Activated CD8-positive, alpha-beta T cell treated with anti-CD3 and anti-CD28 coated beads, Interleukin-2, amount 10 ng/mL, durations not matched to agents 7 days and 5 days (primary cell): ENCODE measurements at regions of chr1 and their contacts with region 1.

Region 1: GRCh38 chr1:9651565-9652378 is at the start of gene PIK3CD:
- DNase-seq: peak; percentile 59
- ATAC-seq: peak; percentile 42
- H3K4me3 Mint-ChIP-seq: peak within 1 kb of the TSS; percentile 96
- H3K27ac Mint-ChIP-seq: peak within 1 kb of the TSS; percentile 95
- H3K4me1 Mint-ChIP-seq: peaks cover 58% of the 10 kb centered on the region
- H3K27me3 Mint-ChIP-seq: no peaks in the 10 kb centered on the region
- total RNA-seq, gene PIK3CD: 283 to 285 TPM

Region 2: DNA sequence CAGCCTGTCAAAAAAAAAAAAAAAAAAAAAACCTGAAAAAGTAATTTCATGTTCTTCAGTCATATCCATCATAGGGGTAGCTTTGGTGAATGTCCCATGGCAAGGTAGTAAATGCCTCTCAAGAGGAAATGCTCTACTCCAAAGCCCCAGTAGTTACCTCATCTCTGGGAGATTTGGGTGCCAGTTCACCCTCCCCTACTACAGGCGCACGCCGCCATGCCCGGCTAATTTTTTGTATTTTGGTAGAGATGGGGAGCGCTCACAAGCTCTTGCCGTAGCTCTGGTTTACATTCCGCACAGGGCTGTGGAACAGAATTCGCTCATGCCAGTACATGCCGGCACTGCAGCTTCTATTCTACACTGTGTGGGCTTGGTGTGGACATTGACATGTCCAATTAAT is 13.4 kb after region 1 on chr1:
- CTCF ChIA-PET with region 1: interaction called, 4 read pairs
- POLR2A ChIA-PET with region 1: interaction called, 25 read pairs
- DNase-seq: no peak
- ATAC-seq: no peak
- H3K4me3 Mint-ChIP-seq: peak overlapping the region; percentile 8
- H3K27ac Mint-ChIP-seq: peak overlapping the region; percentile 60
- H3K4me1 Mint-ChIP-seq: peaks cover 59% of the 10 kb centered on the region
- H3K27me3 Mint-ChIP-seq: no peaks in the 10 kb centered on the region

Region 3: DNA sequence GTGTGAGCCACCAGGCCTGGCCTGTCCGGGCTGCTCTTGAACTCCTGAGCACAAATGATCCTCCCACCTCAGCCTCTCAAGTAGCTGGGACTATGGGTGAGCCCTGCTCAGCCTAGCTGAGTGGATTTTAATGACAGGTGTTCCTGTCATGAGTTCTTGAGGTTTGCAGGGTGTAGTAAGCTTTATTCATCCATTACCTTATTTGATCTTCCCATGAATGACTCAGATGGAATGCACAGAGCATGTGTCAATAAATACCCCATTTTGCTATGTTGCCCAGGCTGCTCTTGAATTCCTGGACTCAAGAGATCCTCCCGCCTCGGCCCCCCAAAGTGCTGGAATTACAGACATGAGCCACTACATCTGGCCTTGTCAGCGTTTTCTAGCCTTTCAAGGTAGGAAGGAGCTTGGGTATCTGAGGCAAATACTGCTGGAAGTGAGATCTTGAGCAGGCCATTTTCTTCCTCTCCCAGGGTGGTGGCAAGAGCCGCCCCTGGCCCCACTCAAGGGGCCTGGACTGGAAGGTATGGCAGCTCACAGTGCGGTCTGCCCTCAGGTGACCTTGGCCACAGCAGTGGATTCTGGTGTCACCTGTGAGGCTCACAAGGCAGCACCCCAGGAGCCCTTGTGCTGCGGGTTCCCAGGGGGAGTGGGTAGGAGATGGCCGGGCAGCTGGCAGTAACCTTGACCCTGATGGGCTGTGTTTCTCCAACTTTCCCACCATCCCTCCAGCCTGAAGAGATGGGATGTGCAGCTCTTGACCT is 19.8 kb after region 1 on chr1:
- CTCF ChIA-PET with region 1: interaction called, 3 read pairs
- POLR2A ChIA-PET with region 1: interaction called, 25 read pairs
- DNase-seq: no peak
- ATAC-seq: peak; percentile 23
- H3K4me3 Mint-ChIP-seq: no peak overlapping the region
- H3K27ac Mint-ChIP-seq: peak overlapping the region; percentile 57
- H3K4me1 Mint-ChIP-seq: peaks cover 62% of the 10 kb centered on the region
- H3K27me3 Mint-ChIP-seq: no peaks in the 10 kb centered on the region

Region 4: GRCh38 chr1:9689011-9689706 is 37.4 kb after region 1 on chr1:
- CTCF ChIA-PET with region 1: interaction called, 24 read pairs
- POLR2A ChIA-PET with region 1: interaction called, 72 read pairs
- DNase-seq: peak; percentile 87
- ATAC-seq: peak; percentile 79
- H3K4me3 Mint-ChIP-seq: peak overlapping the region; percentile 78
- H3K27ac Mint-ChIP-seq: peak overlapping the region; percentile 76
- H3K4me1 Mint-ChIP-seq: peaks cover 73% of the 10 kb centered on the region
- H3K27me3 Mint-ChIP-seq: no peaks in the 10 kb centered on the region

Region 5: GRCh38 chr1:9717193-9718005 is 65.6 kb after region 1 on chr1:
- CTCF ChIA-PET with region 1: interaction called, 8 read pairs
- POLR2A ChIA-PET with region 1: interaction called, 126 read pairs
- DNase-seq: peak; percentile 98
- ATAC-seq: peak; percentile 73
- H3K4me3 Mint-ChIP-seq: peak overlapping the region; percentile 96
- H3K27ac Mint-ChIP-seq: peak overlapping the region; percentile 96
- H3K4me1 Mint-ChIP-seq: peaks cover 76% of the 10 kb centered on the region
- H3K27me3 Mint-ChIP-seq: no peaks in the 10 kb centered on the region

Region 6: DNA sequence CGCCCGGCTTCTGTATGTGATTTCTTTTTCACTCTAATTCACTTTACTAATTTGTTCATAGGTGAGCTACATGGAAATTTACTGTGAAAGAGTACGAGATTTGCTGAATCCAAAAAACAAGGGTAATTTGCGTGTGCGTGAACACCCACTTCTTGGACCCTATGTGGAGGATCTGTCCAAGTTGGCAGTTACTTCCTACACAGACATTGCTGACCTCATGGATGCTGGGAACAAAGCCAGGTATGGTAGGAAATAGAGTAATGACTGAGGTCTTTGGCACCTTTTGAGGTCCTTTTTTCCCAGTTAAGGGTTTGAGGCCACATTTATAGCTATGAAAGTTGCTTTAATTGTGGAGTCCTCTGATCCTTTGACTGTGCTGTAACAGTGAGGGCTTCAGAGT is 615.5 kb after region 1 on chr1:
- CTCF ChIA-PET with region 1: no interaction called
- POLR2A ChIA-PET with region 1: no interaction called
- DNase-seq: no peak
- ATAC-seq: no peak
- H3K4me3 Mint-ChIP-seq: no peak overlapping the region
- H3K27ac Mint-ChIP-seq: no peak overlapping the region
- H3K4me1 Mint-ChIP-seq: peaks cover 3% of the 10 kb centered on the region
- H3K27me3 Mint-ChIP-seq: no peaks in the 10 kb centered on the region